Testis (tissue), 5 donors: ENCODE measurements at regions of chr13 and their contacts with region 1.

Region 1: DNA sequence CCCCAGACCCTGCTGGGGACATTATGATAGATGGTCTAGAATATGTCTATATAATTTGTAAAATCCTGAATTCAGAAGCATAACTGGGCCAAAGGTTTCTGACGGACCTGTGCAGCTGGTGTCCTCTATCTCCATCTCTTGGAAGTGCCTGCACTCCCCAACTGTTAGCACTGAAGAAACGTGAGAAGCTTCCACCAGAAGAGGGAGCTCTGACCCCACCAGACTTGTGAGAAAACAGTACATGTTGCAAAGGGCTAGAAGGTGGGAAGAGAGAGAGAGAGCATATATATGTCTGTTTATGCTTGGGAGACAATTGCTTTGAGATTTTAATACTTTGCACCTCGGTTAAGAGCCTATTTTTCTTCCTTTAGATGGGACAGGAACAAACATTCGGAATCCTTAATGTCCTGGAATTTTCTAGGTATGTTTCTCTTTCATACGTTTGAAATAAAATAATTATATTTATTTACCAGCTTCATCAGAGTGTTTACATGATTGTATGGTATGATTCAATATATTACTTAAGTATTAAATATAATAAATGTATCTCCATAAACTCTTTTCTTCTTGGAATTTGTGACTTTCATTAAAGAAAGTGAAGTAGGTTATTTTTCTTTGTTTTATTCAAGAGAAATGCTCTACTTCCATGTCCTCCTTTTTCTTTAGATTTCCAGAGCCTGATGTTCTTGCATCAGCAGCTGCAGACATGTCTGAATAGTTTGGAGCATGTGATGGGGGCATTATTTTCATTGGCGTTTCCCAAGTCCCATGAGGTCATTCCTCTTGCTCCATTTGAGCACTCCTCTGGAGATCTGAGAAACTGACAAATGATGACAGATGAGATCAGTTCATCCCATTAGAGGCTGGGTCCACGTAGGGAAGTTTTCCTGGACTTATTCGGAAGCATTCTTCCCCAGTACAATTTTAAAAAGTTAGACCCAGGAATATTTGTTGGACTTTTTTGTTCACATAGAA is 202.9 kb downstream of the ATP8A2 start:
- DNase-seq: peak; percentile 92
- H3K4me3 ChIP-seq: no peak overlapping the region
- H3K27ac ChIP-seq: no peak overlapping the region
- H3K4me1 ChIP-seq: no peaks in the 10 kb centered on the region
- H3K27me3 ChIP-seq: no peaks in the 10 kb centered on the region
- CTCF ChIP-seq: peak; percentile 57 to 80 (median 79)
- POLR2A ChIP-seq: no peak

Region 2: DNA sequence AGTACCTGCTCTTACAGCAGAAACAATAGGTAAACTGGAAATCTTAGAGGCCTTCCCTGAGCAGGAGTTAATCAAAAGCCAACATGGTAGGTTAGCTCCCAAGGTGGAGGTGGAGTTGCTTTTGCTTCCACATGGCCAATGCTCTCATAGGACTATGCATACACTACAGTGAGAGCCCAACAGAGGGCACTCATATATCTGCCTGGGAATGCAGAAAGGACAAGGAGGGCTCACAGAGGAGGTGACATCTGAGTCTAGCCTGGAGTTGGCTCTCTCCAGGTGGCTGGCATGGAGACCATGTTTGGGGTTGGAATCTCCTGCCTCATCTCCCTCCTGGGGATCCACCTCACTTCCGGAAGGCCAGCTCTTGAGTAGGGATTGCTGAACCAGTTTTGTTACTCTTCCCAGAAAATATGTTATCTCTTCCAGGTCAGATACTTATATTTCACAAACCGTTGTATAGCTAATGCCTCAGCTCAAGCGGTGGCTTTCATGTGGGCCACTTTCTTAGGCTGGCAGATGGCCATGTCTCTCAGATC is 168.3 kb before region 1 on chr13:
- intact Hi-C with region 1: no loop called
- DNase-seq: no peak
- H3K4me3 ChIP-seq: no peak overlapping the region
- H3K27ac ChIP-seq: no peak overlapping the region
- H3K4me1 ChIP-seq: no peaks in the 10 kb centered on the region
- H3K27me3 ChIP-seq: no peaks in the 10 kb centered on the region
- CTCF ChIP-seq: no peak
- POLR2A ChIP-seq: no peak

Region 3: GRCh38 chr13:26051657-26052311 is 477.1 kb after region 1 on chr13 and contains the start of gene SHISA2:
- intact Hi-C with region 1: loop called (anchors 5 kb)
- DNase-seq: peak; percentile 59
- H3K4me3 ChIP-seq: peak within 1 kb of the TSS; percentile 52 to 64
- H3K27ac ChIP-seq: peak within 1 kb of the TSS in 1 of 2 donors; percentile 66
- H3K4me1 ChIP-seq: no peaks in the 10 kb centered on the region
- H3K27me3 ChIP-seq: no peaks in the 10 kb centered on the region
- CTCF ChIP-seq: no peak
- POLR2A ChIP-seq: peak; percentile 31
- total RNA-seq, gene SHISA2: 8.2 to 20.6 TPM

Region 4: GRCh38 chr13:26067595-26067994 is 492.9 kb after region 1 on chr13:
- intact Hi-C with region 1: loop called (anchors 5 kb)
- DNase-seq: no peak
- H3K4me3 ChIP-seq: no peak overlapping the region
- H3K27ac ChIP-seq: no peak overlapping the region
- H3K4me1 ChIP-seq: no peaks in the 10 kb centered on the region
- H3K27me3 ChIP-seq: no peaks in the 10 kb centered on the region
- CTCF ChIP-seq: no peak
- POLR2A ChIP-seq: no peak